ENCODE measurements at regions of chr1 and their contacts with region 1.

Region 1: DNA sequence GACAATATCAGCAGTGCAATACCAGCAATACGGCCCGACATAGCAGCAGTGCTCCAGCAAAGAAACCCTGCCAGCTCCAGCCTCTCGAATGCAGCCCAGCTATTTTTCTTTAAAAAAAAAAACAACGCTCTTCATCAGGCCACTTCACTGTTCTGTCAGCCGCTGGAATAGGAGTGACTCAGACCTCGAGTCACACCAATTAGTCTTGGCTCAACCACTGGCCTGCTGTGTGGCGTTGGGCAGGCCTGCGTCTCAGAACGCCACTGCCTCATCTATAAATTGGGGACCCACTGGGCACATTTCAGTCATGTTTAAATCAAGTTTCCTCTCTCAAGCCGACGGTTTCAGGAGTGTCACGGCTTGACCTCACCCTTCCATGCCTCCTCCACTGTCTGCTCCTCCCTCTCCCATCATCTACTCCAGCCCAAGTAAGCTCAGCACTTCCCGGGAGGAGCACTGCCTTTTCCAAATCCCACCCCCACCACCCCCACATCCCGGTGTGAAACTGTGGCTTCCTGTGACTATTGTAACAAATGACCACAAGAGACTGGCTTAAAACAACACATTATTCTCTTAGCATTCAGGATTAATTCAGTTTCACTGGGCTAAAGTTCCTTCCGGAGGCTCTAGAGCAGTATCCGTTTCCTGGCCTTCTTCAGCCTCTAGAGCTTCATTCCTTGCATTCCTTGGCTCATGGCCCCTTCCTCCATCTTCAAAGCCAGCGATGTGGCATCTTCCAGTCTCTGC is 71.9 kb upstream of the EFHD2 start:
- DNase-seq: no peak
- H3K4me3 ChIP-seq: no peak overlapping the region
- CTCF ChIP-seq: no peak
- POLR2A ChIP-seq: no peak

Region 2: GRCh38 chr1:15352123-15352957 is 14.5 kb after region 1 on chr1:
- intact Hi-C with region 1: no loop called
- DNase-seq: no peak
- H3K4me3 ChIP-seq: no peak overlapping the region
- CTCF ChIP-seq: no peak
- POLR2A ChIP-seq: no peak

Region 3: DNA sequence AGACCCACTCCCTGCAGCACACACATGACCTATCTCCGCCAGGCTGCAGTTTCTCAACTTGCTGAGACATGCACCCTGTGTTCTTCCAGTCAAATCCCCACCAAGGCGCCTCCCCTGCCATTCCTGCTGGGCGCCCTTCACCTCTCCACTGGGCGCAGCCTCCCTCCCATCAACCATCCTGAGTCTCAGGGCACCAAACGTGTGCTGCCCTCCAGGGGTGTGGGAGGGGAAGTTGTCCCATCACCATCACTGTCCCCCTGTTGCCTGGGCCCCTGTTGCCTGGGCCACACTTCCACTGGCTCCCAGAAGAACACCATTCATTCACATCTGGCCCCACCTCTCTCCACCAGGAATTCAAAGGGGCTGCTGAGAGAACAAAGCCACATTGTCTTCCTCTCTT is 26.9 kb after region 1 on chr1:
- intact Hi-C with region 1: no loop called
- DNase-seq: no peak
- H3K4me3 ChIP-seq: no peak overlapping the region
- CTCF ChIP-seq: no peak
- POLR2A ChIP-seq: no peak

Region 4: GRCh38 chr1:15378729-15379128 is 40.9 kb after region 1 on chr1:
- intact Hi-C with region 1: loop called (anchors 5 kb)
- DNase-seq: no peak
- H3K4me3 ChIP-seq: no peak overlapping the region
- CTCF ChIP-seq: no peak
- POLR2A ChIP-seq: no peak

Region 5: DNA sequence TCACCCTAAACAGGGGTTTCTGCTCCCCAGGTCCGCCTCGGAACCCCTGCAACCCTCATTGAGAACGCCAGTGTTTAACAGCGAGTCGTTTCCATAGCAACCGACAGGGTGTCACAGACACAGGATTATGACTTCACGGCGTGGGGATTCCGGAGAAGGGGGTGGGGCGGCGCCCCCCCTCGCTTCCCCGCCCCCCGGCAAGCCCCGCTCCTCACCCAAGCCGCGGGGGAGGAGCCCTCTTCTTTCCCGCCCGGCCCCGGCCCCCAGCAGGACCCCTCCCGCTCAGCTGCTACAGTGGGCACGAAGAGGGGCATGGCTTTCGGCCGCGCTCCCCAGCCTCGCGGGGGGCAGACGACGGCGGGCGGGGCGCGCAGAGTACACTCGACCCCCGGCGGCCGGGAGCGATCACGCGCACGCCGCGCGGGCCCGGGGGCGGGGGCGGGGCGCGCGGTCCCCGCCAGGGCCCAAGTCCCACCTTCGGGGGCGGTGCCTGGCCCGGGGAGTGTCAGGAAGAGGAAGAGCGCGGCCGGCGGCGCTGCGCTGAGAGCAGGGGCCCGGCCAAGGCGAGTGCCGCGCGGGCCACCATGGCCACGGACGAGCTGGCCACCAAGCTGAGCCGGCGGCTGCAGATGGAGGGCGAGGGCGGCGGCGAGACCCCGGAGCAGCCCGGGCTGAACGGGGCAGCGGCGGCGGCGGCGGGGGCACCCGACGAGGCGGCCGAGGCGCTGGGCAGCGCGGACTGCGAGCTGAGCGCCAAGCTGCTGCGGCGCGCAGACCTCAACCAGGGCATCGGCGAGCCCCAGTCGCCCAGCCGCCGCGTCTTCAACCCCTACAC is 71.8 kb after region 1 on chr1 and contains the start of gene EFHD2:
- intact Hi-C with region 1: no loop called
- DNase-seq: peak; percentile 66 to 96
- H3K4me3 ChIP-seq: peak within 1 kb of the TSS; percentile 73
- CTCF ChIP-seq: no peak
- POLR2A ChIP-seq: no peak
- total RNA-seq, gene EFHD2: 38.9 to 55.7 (median 43.5) TPM